Activated CD4-positive, alpha-beta T cell treated with anti-CD3 and anti-CD28 coated beads for 36 hours (primary cell): ENCODE measurements at regions of chr11 and their contacts with region 1.

Region 1: DNA sequence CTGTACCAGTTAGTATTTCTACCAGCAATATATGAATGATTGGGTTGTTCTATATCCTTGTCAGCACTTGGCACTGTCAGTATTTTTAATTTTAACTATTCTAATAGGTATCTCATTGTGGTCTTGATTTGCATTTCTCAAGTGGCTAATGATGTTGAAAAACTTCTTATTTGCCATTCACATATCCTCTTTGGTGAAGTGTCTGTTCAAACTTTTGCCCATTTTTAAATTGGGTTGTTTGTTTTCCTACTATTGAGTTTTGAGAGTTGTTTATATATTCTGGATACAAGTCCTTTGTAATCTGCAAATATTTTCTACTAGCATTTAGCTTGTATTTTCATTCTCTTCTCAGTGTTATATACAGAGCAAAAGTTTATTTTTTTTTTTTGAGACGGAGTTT is 82.1 kb downstream of the CSTPP1 start:
- DNase-seq: no peak
- ATAC-seq: no peak
- H3K4me3 Mint-ChIP-seq: no peak overlapping the region
- H3K27ac Mint-ChIP-seq: no peak overlapping the region
- H3K4me1 Mint-ChIP-seq: no peaks in the 10 kb centered on the region
- H3K27me3 Mint-ChIP-seq: no peaks in the 10 kb centered on the region

Region 2: DNA sequence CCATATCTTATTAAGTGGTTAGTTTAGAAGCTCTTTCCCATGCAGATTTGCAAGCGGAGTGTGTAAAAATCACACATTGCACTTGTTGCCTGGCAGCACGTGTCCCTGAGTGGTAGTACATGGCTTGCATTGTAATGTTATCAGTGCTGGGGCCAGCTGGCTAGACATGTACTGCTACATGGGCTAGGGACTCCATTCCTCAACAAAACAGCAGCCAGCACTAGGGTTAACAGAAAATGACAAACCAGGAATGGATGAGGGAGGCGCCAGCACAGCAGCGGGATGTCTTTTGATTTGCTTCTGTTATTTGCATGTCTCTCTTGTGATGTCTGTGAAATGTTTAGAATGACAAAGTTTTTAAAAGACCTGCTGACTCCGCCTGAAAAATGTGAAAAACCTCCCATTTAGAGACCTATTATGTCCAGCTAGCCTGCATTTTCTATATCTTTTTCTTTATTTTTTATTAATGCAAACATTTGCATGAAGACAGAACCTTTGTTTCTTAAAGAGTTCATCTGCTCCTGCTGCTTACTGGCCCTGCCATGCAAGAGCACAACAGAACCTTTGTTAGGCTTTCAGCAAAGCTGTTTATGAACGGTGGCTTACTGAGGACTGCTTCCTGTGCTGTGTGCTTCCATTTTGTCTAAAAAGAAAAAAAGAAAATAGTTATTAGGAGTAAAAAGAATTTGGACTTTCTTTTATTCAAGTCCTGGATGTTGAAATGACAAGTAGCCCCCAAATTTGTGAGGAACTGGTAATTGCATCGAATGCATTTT is 41.4 kb before region 1 on chr11:
- CTCF ChIA-PET with region 1: no interaction called
- POLR2A ChIA-PET with region 1: no interaction called
- intact Hi-C with region 1: loop called in 1 of 2 experiments (anchors 2 kb)
- DNase-seq: no peak
- ATAC-seq: no peak
- H3K4me3 Mint-ChIP-seq: no peak overlapping the region
- H3K27ac Mint-ChIP-seq: no peak overlapping the region
- H3K4me1 Mint-ChIP-seq: peaks cover 12% of the 10 kb centered on the region
- H3K27me3 Mint-ChIP-seq: no peaks in the 10 kb centered on the region